ENCODE measurements at regions of chr3 and their contacts with region 1.

Region 1: DNA sequence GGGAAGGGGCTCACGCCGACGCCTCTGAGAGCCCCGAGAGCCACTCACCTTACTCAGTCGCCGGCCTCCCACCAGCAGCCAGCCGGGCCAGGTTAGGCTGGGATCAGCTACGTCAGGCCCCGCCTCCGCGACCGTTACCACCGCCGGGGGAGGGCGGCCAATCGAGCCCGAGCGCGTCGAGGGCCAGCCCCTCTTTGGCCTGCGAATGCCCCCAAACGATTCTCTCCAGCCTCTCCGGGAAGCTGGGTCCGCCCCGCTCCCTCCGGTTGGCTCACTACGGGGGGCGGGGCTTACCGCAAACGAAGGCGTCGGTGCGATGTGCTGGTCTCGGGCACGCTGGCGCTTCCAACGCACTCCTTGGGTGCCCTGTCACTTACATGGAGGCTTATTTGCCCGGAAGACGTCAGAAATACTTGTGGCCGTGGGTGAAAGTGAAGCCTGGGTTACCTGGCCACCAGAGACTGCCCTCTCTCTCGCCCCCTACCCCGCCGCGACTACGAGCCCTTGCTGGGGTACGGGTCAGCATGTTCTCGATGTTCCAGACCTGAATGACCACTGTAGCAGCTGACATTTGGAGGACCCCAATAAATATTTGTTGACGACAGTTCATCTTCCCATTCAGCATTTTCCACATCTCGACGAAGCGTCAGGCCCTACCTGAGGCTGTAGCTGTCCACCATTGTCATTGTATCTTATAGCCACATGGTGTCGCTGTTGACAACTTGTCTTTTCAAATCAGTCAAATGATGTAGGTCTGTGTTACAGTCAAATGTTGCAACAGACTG is at the start of gene CEP70:
- DNase-seq: peak; percentile 89 to 97
- H3K4me3 ChIP-seq: peak within 1 kb of the TSS; percentile 80
- H3K27ac ChIP-seq: peak within 1 kb of the TSS; percentile 84
- H3K4me1 ChIP-seq: peaks cover 14% of the 10 kb centered on the region
- H3K27me3 ChIP-seq: no peaks in the 10 kb centered on the region
- CTCF ChIP-seq: peak; percentile 93
- total RNA-seq, gene CEP70: 50.5 and 73.6 TPM in 2 replicates

Region 2: DNA sequence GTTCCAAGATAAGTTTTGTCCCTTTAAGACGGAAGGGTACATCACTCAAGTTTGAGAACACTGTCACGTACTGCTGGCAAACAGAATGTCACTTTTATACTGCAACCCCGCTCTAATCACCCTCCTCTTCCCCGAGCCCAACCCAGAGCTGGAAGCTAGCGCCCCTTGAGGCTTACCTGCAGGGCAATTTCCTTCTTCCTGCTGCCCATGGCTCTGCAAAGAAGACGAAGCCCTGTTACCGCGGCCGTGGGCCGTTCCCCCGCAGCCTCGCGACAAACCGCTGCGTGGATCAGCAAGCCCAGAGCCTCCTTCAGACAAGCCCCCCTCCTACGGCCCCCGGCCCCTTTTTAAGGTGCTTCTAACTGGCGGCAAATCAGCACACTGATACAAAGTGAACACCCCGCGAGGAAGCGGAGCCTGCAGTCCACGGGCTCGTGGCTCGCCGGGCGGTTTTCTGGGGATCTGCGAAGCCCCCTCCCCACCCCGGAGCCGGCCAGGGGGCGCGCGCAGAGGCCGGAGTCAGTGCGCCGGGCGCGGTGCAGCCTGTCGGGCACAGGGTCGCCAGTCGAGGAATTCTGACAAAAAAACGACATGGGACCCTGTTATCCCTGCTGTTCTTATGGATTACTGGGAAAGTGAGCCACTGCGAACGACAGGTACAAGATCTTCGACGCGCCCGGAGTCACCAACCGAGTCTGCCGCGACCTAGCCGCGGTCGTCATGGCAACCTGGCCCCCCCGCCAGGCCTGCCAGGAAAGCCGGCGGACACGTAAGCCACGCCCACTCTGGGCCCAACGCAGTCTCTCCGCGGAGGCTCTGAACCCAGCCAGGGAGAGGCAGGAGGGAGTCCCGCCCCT is 265.0 kb before region 1 on chr3 and contains the start of gene NME9:
- CTCF ChIA-PET with region 1: no interaction called
- POLR2A ChIA-PET with region 1: no interaction called
- intact Hi-C with region 1: loop called (anchors 2 kb)
- DNase-seq: peak; percentile 58 to 83
- H3K4me3 ChIP-seq: peak within 1 kb of the TSS; percentile 78
- H3K27ac ChIP-seq: no peak within 1 kb of the TSS
- H3K4me1 ChIP-seq: peaks cover 7% of the 10 kb centered on the region
- H3K27me3 ChIP-seq: no peaks in the 10 kb centered on the region; the same call in 1 of the 2 replicates
- CTCF ChIP-seq: peak; percentile 54; the same call in 1 of the 2 replicates
- total RNA-seq, gene NME9: 1.3 TPM in 1 of 2 replicates, not detected in the other

Region 3: GRCh38 chr3:138434276-138434874 is 160.0 kb before region 1 on chr3 and contains the start of gene ESYT3:
- CTCF ChIA-PET with region 1: no interaction called
- POLR2A ChIA-PET with region 1: no interaction called
- intact Hi-C with region 1: loop called (anchors 5 kb)
- DNase-seq: peak; percentile 94 to 95
- H3K4me3 ChIP-seq: peak within 1 kb of the TSS; percentile 77
- H3K27ac ChIP-seq: no peak within 1 kb of the TSS
- H3K4me1 ChIP-seq: no peaks in the 10 kb centered on the region
- H3K27me3 ChIP-seq: no peaks in the 10 kb centered on the region
- CTCF ChIP-seq: no peak
- total RNA-seq, gene ESYT3: 6.4 and 8.0 TPM in 2 replicates

Region 4: DNA sequence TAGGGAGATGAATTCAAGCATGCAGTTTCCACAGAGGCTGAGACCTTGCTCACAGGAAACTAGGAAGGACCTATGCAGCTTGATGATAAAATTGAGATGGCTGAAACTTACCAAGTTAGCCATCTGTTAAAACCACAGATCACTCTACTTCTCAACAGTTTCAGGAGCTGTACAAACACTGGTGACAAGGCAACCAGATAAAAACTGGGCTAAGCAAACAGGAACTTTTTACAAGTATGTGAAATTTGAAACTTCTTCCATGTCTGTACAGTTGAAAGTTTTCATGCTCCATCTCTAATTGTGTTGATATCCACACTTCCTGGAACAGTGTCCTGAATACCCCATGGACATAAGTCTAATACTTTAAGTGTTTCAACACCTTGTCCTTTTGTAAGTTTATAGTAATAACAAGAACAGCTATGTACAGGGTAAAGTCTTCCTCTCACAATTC is 92.5 kb after region 1 on chr3:
- CTCF ChIA-PET with region 1: no interaction called
- POLR2A ChIA-PET with region 1: no interaction called
- intact Hi-C with region 1: loop called (anchors 2 kb)
- DNase-seq: peak; percentile 37 to 92
- H3K4me3 ChIP-seq: no peak overlapping the region
- H3K27ac ChIP-seq: peak overlapping the region; percentile 65
- H3K4me1 ChIP-seq: peaks cover 27% of the 10 kb centered on the region
- H3K27me3 ChIP-seq: no peaks in the 10 kb centered on the region
- CTCF ChIP-seq: no peak

Region 5: GRCh38 chr3:138834359-138835212 is 240.2 kb after region 1 on chr3 and contains the start of gene PIK3CB:
- CTCF ChIA-PET with region 1: no interaction called
- POLR2A ChIA-PET with region 1: no interaction called
- intact Hi-C with region 1: loop called (anchors 10 kb)
- DNase-seq: peak; percentile 63 to 92
- H3K4me3 ChIP-seq: peak within 1 kb of the TSS; percentile 63
- H3K27ac ChIP-seq: peak within 1 kb of the TSS; percentile 92
- H3K4me1 ChIP-seq: peaks cover 16% of the 10 kb centered on the region
- H3K27me3 ChIP-seq: no peaks in the 10 kb centered on the region
- CTCF ChIP-seq: peak; percentile 34; the same call in 1 of the 2 replicates
- total RNA-seq, gene PIK3CB: 41.9 and 47.8 TPM in 2 replicates

Region 6: GRCh38 chr3:138923531-138923994 is 329.2 kb after region 1 on chr3:
- CTCF ChIA-PET with region 1: interaction called, 22 read pairs
- POLR2A ChIA-PET with region 1: interaction called, 4 read pairs
- intact Hi-C with region 1: loop called (anchors 1 kb)
- DNase-seq: peak; percentile 67 to 85
- H3K4me3 ChIP-seq: no peak overlapping the region
- H3K27ac ChIP-seq: no peak overlapping the region
- H3K4me1 ChIP-seq: peaks cover 30% of the 10 kb centered on the region
- H3K27me3 ChIP-seq: no peaks in the 10 kb centered on the region
- CTCF ChIP-seq: peak; percentile 92

Region 7: GRCh38 chr3:139329345-139329850 is 735.1 kb after region 1 on chr3:
- CTCF ChIA-PET with region 1: no interaction called
- POLR2A ChIA-PET with region 1: no interaction called
- intact Hi-C with region 1: loop called (anchors 10 kb)
- DNase-seq: peak; percentile 72 to 94
- H3K4me3 ChIP-seq: no peak overlapping the region
- H3K27ac ChIP-seq: no peak overlapping the region
- H3K4me1 ChIP-seq: 0 out of 2 replicates have a peak, but pooled peaks cover 3% of the 10 kb centered on the region
- H3K27me3 ChIP-seq: peaks cover 10% of the 10 kb centered on the region
- CTCF ChIP-seq: peak; percentile 97

Measured in PC-9 (cell line).